Caco-2 (cell line): ENCODE measurements at regions of chr3 and their contacts with region 1.

Region 1: GRCh38 chr3:113802795-113803455 is 35.7 kb upstream of the GRAMD1C start:
- DNase-seq: no peak
- H3K4me3 ChIP-seq: no peak overlapping the region
- H3K4me3 Mint-ChIP-seq: no peak overlapping the region
- H3K27ac Mint-ChIP-seq: no peak overlapping the region
- H3K4me1 ChIP-seq: no peaks in the 10 kb centered on the region
- H3K4me1 Mint-ChIP-seq: no peaks in the 10 kb centered on the region
- H3K27me3 ChIP-seq: no peaks in the 10 kb centered on the region
- H3K27me3 Mint-ChIP-seq: no peaks in the 10 kb centered on the region
- CTCF ChIP-seq: no peak

Region 2: DNA sequence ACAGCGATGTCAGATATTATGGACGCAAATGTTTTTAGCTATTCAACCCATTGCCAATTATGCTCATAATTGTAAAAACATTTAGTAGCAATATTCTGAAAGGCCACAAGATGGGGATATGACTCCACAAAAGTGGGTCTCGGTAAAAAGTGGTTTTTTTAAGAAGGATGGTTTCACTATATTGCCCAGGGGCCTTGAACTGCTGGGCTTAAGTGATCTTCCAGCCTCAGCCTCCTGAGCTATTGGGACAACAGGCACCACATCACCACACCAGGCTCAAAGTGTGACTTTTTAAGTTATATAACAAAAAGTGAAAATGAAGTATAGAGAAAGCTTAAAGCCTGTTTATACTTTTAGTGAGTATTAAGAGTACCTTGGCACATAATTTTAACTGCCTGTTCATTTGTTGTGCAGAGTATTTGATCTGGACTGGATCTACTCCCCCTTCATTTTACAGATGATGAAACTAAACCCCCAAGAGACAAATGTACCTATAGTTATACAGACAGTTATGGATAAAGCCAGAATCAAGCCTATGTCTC is 66.3 kb before region 1 on chr3:
- CTCF ChIA-PET with region 1: no interaction called
- POLR2A ChIA-PET with region 1: no interaction called
- intact Hi-C with region 1: loop called (anchors 5 kb)
- DNase-seq: peak in 1 of 2 experiments; percentile 60
- H3K4me3 ChIP-seq: no peak overlapping the region
- H3K4me3 Mint-ChIP-seq: no peak overlapping the region
- H3K27ac Mint-ChIP-seq: no peak overlapping the region
- H3K4me1 ChIP-seq: peaks cover 6% of the 10 kb centered on the region; the same call in 1 of the 2 replicates
- H3K4me1 Mint-ChIP-seq: peaks cover 7% of the 10 kb centered on the region
- H3K27me3 ChIP-seq: no peaks in the 10 kb centered on the region
- H3K27me3 Mint-ChIP-seq: no peaks in the 10 kb centered on the region
- CTCF ChIP-seq: peak; percentile 45 to 52